ENCODE measurements at regions of chr14 and their contacts with region 1.

Region 1: DNA sequence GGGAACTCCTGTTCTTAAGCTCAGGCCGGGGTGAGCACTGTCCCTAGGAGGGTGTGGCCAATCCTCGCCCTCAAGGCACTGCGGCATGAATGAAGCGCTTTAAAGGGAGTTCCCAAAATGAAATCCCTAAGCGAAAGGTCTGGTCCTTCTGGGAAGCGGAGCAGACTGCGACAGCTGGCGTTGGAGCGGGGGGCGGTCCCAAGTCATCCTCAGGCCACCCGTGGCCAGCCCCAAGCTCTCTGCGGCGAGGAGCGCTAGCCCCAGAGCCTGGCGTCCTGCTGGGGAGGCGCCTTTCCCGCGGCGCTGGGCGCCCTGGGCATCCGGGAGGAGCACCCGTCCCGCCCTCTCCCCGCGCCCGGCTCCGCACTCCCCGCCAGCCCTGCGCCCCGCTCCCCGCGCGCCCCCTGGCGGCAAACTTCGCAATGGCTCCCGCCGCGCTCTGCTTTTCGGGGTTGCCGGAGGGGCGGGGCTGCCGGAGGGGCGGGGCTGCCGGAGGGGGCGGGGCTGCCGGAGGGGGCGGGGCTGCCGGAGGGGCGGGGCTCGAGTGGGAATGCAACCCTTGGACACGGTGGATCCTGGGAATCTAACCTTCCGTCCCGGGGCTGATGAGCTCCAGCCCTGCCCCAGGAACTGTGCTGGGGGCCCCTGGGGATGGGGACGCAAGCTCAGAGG is 25.4 kb downstream of the ZBTB42 start:
- DNase-seq: peak; percentile 88 to 95
- H3K4me3 ChIP-seq: peak overlapping the region; percentile 68
- H3K4me3 Mint-ChIP-seq: peak overlapping the region; percentile 85
- H3K27ac Mint-ChIP-seq: no peak overlapping the region
- H3K4me1 ChIP-seq: 0 out of 2 replicates have a peak, but pooled peaks cover 3% of the 10 kb centered on the region
- H3K4me1 Mint-ChIP-seq: no peaks in the 10 kb centered on the region
- H3K27me3 ChIP-seq: no peaks in the 10 kb centered on the region
- H3K27me3 Mint-ChIP-seq: peaks cover 7% of the 10 kb centered on the region
- CTCF ChIP-seq: peak; percentile 67 to 68

Region 2: GRCh38 chr14:104752735-104753531 is 73.4 kb before region 1 on chr14 and contains the start of gene SIVA1:
- CTCF ChIA-PET with region 1: interaction called, 26 read pairs
- POLR2A ChIA-PET with region 1: interaction called, 6 read pairs
- intact Hi-C with region 1: no loop called
- DNase-seq: peak; percentile 99
- H3K4me3 ChIP-seq: peak within 1 kb of the TSS; percentile 83
- H3K4me3 Mint-ChIP-seq: peak within 1 kb of the TSS; percentile 90
- H3K27ac Mint-ChIP-seq: peak within 1 kb of the TSS; percentile 93
- H3K4me1 ChIP-seq: peaks cover 32% of the 10 kb centered on the region
- H3K4me1 Mint-ChIP-seq: peaks cover 19% of the 10 kb centered on the region
- H3K27me3 ChIP-seq: no peaks in the 10 kb centered on the region
- H3K27me3 Mint-ChIP-seq: no peaks in the 10 kb centered on the region
- CTCF ChIP-seq: no peak
- total RNA-seq, gene SIVA1: 99.3 and 105 TPM in 2 replicates

Region 3: GRCh38 chr14:104768437-104769323 is 57.6 kb before region 1 on chr14:
- CTCF ChIA-PET with region 1: interaction called, 58 read pairs
- POLR2A ChIA-PET with region 1: interaction called, 6 read pairs
- intact Hi-C with region 1: loop called (anchors 1 kb)
- DNase-seq: peak; percentile 90 to 95
- H3K4me3 ChIP-seq: no peak overlapping the region
- H3K4me3 Mint-ChIP-seq: peak overlapping the region; percentile 31
- H3K27ac Mint-ChIP-seq: peak overlapping the region; percentile 72
- H3K4me1 ChIP-seq: peaks cover 18% of the 10 kb centered on the region
- H3K4me1 Mint-ChIP-seq: peaks cover 13% of the 10 kb centered on the region
- H3K27me3 ChIP-seq: no peaks in the 10 kb centered on the region
- H3K27me3 Mint-ChIP-seq: no peaks in the 10 kb centered on the region
- CTCF ChIP-seq: peak; percentile 90 to 93

Region 4: GRCh38 chr14:104865081-104865643 is 38.8 kb after region 1 on chr14 and contains the start of gene CEP170B:
- CTCF ChIA-PET with region 1: interaction called, 21 read pairs
- POLR2A ChIA-PET with region 1: interaction called, 8 read pairs
- intact Hi-C with region 1: loop called (anchors 1 kb)
- DNase-seq: peak in 1 of 2 experiments; percentile 73
- H3K4me3 ChIP-seq: peak within 1 kb of the TSS; percentile 72
- H3K4me3 Mint-ChIP-seq: peak within 1 kb of the TSS; percentile 83
- H3K27ac Mint-ChIP-seq: peak within 1 kb of the TSS; percentile 69
- H3K4me1 ChIP-seq: peaks cover 6% of the 10 kb centered on the region; the same call in 1 of the 2 replicates
- H3K4me1 Mint-ChIP-seq: peaks cover 10% of the 10 kb centered on the region
- H3K27me3 ChIP-seq: no peaks in the 10 kb centered on the region
- H3K27me3 Mint-ChIP-seq: no peaks in the 10 kb centered on the region
- CTCF ChIP-seq: no peak
- total RNA-seq, gene CEP170B: 31.6 and 32.0 TPM in 2 replicates

Region 5: DNA sequence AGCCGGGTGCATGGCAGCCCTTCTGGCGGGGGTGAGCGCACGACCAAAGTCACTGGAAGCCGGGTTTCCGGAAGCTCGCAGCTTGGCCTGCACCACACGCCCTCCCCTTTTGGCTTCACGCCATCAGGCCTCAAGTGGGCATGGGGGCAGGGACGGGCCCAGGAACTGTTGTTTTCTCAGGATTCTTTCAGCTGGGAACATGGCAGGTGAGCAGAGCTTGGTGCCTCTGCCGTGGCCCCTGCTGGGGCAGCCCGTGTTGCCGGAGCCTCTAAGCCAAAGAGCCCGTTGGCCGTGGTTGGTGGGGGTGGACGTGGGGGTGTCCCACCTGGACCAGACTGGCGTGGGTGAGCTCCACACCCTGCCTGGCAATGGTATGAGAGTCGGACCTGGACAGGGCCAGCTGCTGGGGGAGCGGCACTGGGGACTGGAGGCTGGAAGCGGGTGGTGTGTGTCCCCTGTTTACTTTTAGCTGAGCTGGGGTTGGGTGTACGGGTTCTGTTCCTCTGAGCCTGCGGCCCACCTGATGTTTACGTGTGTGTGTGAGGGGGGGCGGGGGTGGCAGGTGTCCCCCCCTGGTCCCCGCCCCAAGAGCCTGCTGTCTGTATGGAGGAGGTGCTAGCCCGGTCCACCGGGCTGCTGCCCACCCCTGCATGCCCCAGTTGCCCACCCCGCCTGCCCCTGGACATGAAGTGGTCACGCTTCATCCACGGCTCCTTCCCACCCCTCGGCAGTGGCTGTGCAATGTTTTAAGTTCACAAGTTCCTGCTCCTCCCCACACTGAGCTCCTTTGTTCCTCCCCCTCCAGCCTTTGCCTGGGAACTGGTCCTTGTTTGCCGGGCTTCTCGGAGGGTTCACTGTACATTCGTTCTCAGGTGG is 69.7 kb after region 1 on chr14:
- CTCF ChIA-PET with region 1: interaction called, 15 read pairs
- POLR2A ChIA-PET with region 1: no interaction called
- intact Hi-C with region 1: no loop called
- DNase-seq: peak in 1 of 2 experiments; percentile 33
- H3K4me3 ChIP-seq: no peak overlapping the region
- H3K4me3 Mint-ChIP-seq: no peak overlapping the region
- H3K27ac Mint-ChIP-seq: no peak overlapping the region
- H3K4me1 ChIP-seq: no peaks in the 10 kb centered on the region
- H3K4me1 Mint-ChIP-seq: no peaks in the 10 kb centered on the region
- H3K27me3 ChIP-seq: no peaks in the 10 kb centered on the region
- H3K27me3 Mint-ChIP-seq: peaks cover 1% of the 10 kb centered on the region
- CTCF ChIP-seq: no peak

Region 6: GRCh38 chr14:105045710-105046326 is 219.5 kb after region 1 on chr14:
- CTCF ChIA-PET with region 1: interaction called, 10 read pairs
- POLR2A ChIA-PET with region 1: no interaction called
- intact Hi-C with region 1: no loop called
- DNase-seq: peak; percentile 83 to 95
- H3K4me3 ChIP-seq: no peak overlapping the region
- H3K4me3 Mint-ChIP-seq: no peak overlapping the region
- H3K27ac Mint-ChIP-seq: no peak overlapping the region
- H3K4me1 ChIP-seq: peaks cover 3% of the 10 kb centered on the region; the same call in 1 of the 2 replicates
- H3K4me1 Mint-ChIP-seq: no peaks in the 10 kb centered on the region
- H3K27me3 ChIP-seq: no peaks in the 10 kb centered on the region; the same call in 1 of the 2 replicates
- H3K27me3 Mint-ChIP-seq: peaks cover 5% of the 10 kb centered on the region
- CTCF ChIP-seq: peak; percentile 99